Activated naive CD4-positive, alpha-beta T cell treated with anti-CD3 and anti-CD28 coated beads for 36 hours (primary cell): ENCODE measurements at regions of chr4 and their contacts with region 1.

Region 1: GRCh38 chr4:77758804-77759203 is 60.4 kb downstream of the CNOT6L start:
- DNase-seq: no peak
- H3K4me3 Mint-ChIP-seq: no peak overlapping the region
- H3K27ac Mint-ChIP-seq: peak overlapping the region; percentile 73
- H3K4me1 Mint-ChIP-seq: peaks cover 29% of the 10 kb centered on the region
- H3K27me3 Mint-ChIP-seq: no peaks in the 10 kb centered on the region

Region 2: GRCh38 chr4:77745792-77746191 is 13.0 kb before region 1 on chr4:
- CTCF ChIA-PET with region 1: interaction called, 4 read pairs
- intact Hi-C with region 1: loop called (anchors 2 kb)
- DNase-seq: no peak
- H3K4me3 Mint-ChIP-seq: no peak overlapping the region
- H3K27ac Mint-ChIP-seq: no peak overlapping the region
- H3K4me1 Mint-ChIP-seq: peaks cover 23% of the 10 kb centered on the region
- H3K27me3 Mint-ChIP-seq: no peaks in the 10 kb centered on the region

Region 3: GRCh38 chr4:77777135-77777807 is 18.5 kb after region 1 on chr4:
- CTCF ChIA-PET with region 1: no interaction called
- intact Hi-C with region 1: loop called (anchors 2 kb)
- DNase-seq: no peak
- H3K4me3 Mint-ChIP-seq: no peak overlapping the region
- H3K27ac Mint-ChIP-seq: no peak overlapping the region
- H3K4me1 Mint-ChIP-seq: peaks cover 47% of the 10 kb centered on the region
- H3K27me3 Mint-ChIP-seq: no peaks in the 10 kb centered on the region

Region 4: GRCh38 chr4:77994194-77994721 is 235.5 kb after region 1 on chr4:
- CTCF ChIA-PET with region 1: no interaction called
- intact Hi-C with region 1: no loop called
- DNase-seq: peak; percentile 7
- H3K4me3 Mint-ChIP-seq: no peak overlapping the region
- H3K27ac Mint-ChIP-seq: no peak overlapping the region
- H3K4me1 Mint-ChIP-seq: no peaks in the 10 kb centered on the region
- H3K27me3 Mint-ChIP-seq: no peaks in the 10 kb centered on the region